Stomach (tissue), 19 donors: ENCODE measurements at regions of chr3 and their contacts with region 1.

Region 1: DNA sequence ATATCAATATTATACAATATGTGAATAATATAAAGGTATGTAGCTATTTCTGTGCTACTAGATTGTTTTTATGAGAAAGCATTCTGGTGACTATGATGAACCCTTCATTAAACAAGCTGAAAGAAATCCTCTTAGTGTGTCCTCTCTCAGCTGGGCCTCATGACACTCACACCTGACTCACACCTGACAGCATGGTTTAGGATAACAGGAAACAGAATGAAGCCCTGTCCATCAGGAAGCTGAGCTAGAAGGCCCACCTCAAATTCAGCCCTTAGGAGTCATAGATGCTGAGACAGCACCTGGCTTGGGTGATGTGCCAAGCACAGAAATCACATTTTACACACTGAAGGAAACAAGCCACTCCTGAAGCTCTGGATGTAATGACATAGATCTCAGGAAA is 30.8 kb downstream of the CHCHD4 start:
- DNase-seq: no peak
- H3K4me3 ChIP-seq: no peak overlapping the region
- H3K27ac ChIP-seq: no peak overlapping the region
- H3K4me1 ChIP-seq: no peaks in the 10 kb centered on the region
- H3K27me3 ChIP-seq: no peaks in the 10 kb centered on the region
- CTCF ChIP-seq: no peak
- EP300 ChIP-seq: no peak
- POLR2A ChIP-seq: no peak

Region 2: GRCh38 chr3:13916375-13916774 is 177.5 kb before region 1 on chr3:
- intact Hi-C with region 1: loop called (anchors 10 kb)
- DNase-seq: no peak
- H3K4me3 ChIP-seq: no peak overlapping the region
- H3K27ac ChIP-seq: no peak overlapping the region
- H3K4me1 ChIP-seq: no peaks in the 10 kb centered on the region
- H3K27me3 ChIP-seq: no peaks in the 10 kb centered on the region
- CTCF ChIP-seq: no peak
- EP300 ChIP-seq: no peak
- POLR2A ChIP-seq: no peak

Region 3: DNA sequence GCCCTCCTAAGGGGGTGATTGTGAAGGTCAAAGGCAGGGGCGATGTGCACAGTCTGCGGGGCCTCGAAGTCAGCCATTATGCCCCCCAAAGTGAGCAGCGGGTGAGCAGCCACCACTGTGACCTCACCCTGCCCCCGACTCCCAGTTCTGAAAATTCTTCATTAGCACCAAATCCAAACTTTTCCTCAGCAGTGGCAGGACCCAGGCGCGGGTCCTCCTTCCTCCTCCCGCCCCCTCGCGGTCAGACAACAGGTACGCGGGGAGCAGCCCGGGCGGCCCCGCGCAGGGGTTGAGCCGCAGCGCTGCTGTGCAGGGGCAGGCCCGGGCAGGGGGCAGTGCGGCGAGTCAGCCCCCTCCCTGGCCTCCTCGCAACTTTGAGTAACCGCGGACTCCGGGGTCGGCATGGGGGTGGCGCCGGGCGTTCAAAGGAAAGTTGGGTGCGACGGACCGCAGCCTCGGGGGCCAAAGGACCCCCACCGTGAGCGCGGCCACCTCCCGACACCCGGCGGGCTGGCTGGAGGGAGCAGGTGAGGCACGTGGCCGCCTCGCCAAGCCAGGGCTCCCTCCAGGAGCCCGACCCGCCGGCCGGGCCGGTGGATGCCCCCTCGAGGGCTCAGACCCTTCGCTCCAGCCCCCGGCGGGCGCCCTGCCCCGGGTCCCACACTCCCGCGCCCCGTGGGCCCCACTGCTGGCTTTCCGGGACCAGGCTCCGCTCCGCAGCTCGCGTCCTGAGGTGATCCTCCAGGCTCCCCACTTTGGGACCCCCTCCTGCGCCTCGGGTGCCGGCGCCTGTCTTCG is 508.4 kb after region 1 on chr3:
- intact Hi-C with region 1: no loop called
- DNase-seq: peak in 1 of 2 donors; percentile 39
- H3K4me3 ChIP-seq: peak overlapping the region; percentile 40 to 52 (median 48)
- H3K27ac ChIP-seq: peak overlapping the region in 3 of 5 donors; percentile 18 to 54 (median 31)
- H3K4me1 ChIP-seq: peaks cover 7 to 26% (median 16%) of the 10 kb centered on the region in 4 donors
- H3K27me3 ChIP-seq: peaks cover 0 to 82% (median 16%) of the 10 kb centered on the region in 3 donors
- CTCF ChIP-seq: peak in 1 of 7 experiments; percentile 21
- EP300 ChIP-seq: no peak
- POLR2A ChIP-seq: no peak